ENCODE measurements at regions of chr6 and their contacts with region 1.

Region 1: DNA sequence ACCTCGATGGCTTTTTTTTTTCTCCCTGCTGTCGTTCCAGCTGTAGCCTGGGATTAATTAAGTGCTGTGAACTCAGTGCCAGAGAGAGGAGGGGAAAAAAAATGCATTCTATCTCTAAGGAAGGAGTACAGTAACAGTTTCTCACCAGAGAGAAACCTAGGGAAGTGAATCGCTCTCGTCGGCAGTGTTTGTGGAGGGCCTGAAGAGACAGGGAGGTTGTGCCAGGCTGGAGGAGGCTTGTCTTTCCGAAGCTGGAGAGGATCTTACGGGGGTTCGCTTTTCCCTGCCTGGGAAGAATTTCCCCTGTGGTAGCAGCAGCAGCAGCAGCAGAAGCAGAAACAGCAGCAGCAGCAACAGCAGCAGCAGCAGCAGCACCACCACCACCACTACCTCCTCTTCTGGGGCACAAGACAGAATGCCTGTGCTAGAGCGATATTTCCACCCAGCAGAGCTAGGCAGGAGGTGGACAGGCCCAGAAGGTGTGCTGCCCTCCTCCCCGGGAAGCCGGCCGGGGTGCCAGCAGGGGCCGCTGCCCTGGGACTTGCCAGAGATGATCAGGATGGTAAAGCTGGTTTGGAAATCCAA is 186.5 kb downstream of the PDE7B start:
- DNase-seq: peak; percentile 26 to 73 (median 48)
- ATAC-seq: peak; percentile 44 to 59 (median 54)
- H3K4me3 ChIP-seq: peak overlapping the region; percentile 6 to 63 (median 55)
- H3K27ac ChIP-seq: peak overlapping the region; percentile 73 to 91 (median 84)
- H3K4me1 ChIP-seq: peaks cover 0 to 75% (median 37%) of the 10 kb centered on the region in 12 donors
- H3K27me3 ChIP-seq: no peaks in the 10 kb centered on the region
- CTCF ChIP-seq: peak in 9 of 12 donors; percentile 11 to 51 (median 35)
- POLR2A ChIP-seq: no peak

Region 2: DNA sequence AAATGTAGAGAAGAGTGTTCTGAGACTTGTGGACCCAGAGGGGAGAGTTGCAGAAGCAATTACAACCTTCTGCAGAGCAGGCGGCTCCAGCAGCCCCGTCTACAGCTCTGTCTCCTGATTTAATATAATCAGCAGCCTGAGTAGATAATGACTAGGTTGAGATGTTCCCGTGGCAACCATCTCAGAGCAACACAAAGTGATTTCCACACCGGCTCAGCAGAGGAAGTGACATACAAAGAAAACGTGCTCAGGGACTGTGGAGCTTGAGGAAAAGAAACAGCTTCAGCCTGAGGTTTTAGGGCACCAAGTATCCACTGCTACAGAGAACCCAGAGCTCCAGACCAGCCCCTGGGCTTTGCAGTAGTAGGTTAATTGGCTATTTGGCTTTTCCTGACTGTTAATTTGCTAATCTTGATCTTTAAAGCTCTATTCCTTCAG is 75.8 kb after region 1 on chr6:
- intact Hi-C with region 1: loop called in 4 of 10 experiments (anchors 5 to 10 kb)
- DNase-seq: peak in 4 of 5 donors; percentile 67 to 75 (median 74)
- ATAC-seq: peak; percentile 94 to 97 (median 96)
- H3K4me3 ChIP-seq: peak overlapping the region in 1 of 12 donors; percentile 3
- H3K27ac ChIP-seq: peak overlapping the region; percentile 3 to 89 (median 74)
- H3K4me1 ChIP-seq: peaks cover 0 to 67% (median 32%) of the 10 kb centered on the region in 12 donors
- H3K27me3 ChIP-seq: no peaks in the 10 kb centered on the region
- CTCF ChIP-seq: no peak
- POLR2A ChIP-seq: peak in 1 of 2 donors; percentile 63

Region 3: DNA sequence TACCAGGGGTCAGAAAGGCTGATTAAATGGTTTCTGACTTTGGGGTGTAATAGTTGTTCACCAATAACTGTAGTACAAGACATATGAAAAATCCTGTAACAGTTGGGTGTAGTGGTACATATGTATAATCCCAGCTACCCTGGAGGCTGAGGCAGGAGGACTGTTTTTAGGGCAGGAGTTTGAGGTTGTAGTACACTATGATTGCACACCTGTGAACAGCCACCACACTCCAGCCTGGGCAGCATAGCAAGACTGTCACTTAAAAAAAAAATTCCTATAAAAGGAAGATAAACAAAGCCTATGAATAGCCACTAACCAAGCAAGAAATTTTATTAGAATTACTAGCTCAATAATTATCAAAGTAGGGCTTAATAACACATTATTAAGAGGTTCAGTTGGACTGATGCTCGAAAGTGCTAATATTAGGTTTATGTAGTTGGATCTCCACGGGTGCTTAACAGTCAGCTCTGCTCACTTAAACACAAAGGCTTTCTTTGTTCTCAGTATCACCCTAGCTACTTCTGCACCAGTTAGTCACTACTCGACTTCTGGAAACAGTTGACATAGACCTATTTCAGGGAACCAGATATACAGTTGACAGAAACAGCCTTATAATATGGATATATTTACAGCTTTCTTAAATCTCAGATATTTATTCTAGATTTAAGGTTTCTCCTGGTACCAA is 99.2 kb after region 1 on chr6:
- intact Hi-C with region 1: no loop called
- DNase-seq: no peak
- ATAC-seq: peak; percentile 85 to 97 (median 94)
- H3K4me3 ChIP-seq: peak overlapping the region in 1 of 12 donors; percentile 13
- H3K27ac ChIP-seq: peak overlapping the region in 9 of 12 donors; percentile 3 to 51 (median 23)
- H3K4me1 ChIP-seq: peaks cover 0 to 26% (median 6%) of the 10 kb centered on the region in 12 donors
- H3K27me3 ChIP-seq: no peaks in the 10 kb centered on the region
- CTCF ChIP-seq: no peak
- POLR2A ChIP-seq: no peak

Region 4: DNA sequence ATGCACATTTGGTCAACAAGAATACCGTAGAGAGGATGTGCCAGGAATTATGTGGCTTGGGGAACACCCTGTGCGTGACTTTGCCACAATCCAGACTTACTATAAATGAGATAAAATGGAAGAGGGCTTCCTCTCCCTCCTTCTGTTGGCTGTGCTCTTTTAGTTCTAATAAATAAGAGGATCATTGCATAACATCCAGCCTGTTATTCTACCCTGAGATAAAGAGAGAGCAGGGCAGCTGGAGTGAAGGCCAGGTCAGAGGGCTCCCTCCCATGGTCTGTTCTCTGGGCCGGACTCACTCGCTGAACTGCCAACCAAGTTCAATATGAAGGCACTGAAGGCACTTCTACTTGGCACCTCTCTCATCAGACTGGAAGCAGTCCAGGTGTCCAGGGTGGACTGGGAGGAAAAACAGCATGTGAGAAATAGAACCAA is 120.4 kb after region 1 on chr6:
- intact Hi-C with region 1: loop called in 4 of 10 experiments (anchors 5 to 10 kb)
- DNase-seq: peak; percentile 53 to 79 (median 72)
- ATAC-seq: peak; percentile 86 to 96 (median 90)
- H3K4me3 ChIP-seq: no peak overlapping the region
- H3K27ac ChIP-seq: peak overlapping the region in 11 of 12 donors; percentile 2 to 61 (median 23)
- H3K4me1 ChIP-seq: peaks cover 0 to 47% (median 11%) of the 10 kb centered on the region in 12 donors
- H3K27me3 ChIP-seq: no peaks in the 10 kb centered on the region
- CTCF ChIP-seq: peak in 8 of 12 donors; percentile 26 to 68 (median 36)
- POLR2A ChIP-seq: no peak

Measured in heart left ventricle (tissue), 16 donors.